ENCODE measurements at regions of chr18 and their contacts with region 1.

Region 1: GRCh38 chr18:45657357-45658335 is 42.4 kb downstream of the SLC14A2 start:
- DNase-seq: no peak
- H3K4me3 ChIP-seq: no peak overlapping the region
- H3K27ac ChIP-seq: no peak overlapping the region
- H3K4me1 ChIP-seq: no peaks in the 10 kb centered on the region
- H3K27me3 ChIP-seq: no peaks in the 10 kb centered on the region
- CTCF ChIP-seq: no peak

Region 2: DNA sequence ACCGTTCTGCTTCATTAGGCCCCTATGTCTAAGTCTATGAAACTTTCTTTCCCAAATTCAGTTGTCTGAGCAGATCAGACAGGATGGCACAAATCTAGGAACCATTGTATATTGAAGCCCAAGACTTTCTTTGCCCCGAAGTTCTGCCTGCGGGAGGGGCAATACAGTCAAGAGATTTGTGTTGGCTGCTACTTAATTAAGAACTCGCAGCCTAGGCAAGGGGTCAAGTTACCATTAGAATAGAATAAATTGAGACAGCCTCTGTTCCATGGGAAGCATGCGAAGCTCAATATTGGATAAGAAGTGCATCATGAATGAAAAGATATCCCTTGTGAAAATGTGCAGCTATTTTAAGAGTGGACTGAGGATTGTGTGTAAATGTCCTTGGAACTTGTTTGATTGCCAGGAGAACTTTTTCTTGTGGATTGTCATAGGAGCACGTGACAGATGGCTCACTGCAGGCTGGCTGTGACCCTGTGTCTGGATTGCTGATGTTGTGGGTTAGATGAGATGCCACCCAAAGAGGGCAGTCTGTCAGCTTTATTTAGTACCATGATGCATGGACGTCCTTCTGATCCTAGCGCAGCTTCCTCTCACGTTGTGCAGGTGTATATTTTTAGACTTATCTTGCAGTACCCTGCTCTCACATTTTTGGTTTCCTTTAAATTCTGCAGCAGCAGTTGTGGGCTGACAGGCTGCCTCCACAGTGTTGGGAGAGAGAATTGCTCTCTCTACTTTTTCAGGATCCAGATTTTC is 477.5 kb after region 1 on chr18:
- CTCF ChIA-PET with region 1: no interaction called
- POLR2A ChIA-PET with region 1: interaction called, 20 read pairs
- intact Hi-C with region 1: no loop called
- DNase-seq: no peak
- H3K4me3 ChIP-seq: no peak overlapping the region
- H3K27ac ChIP-seq: no peak overlapping the region
- H3K4me1 ChIP-seq: no peaks in the 10 kb centered on the region
- H3K27me3 ChIP-seq: no peaks in the 10 kb centered on the region
- CTCF ChIP-seq: no peak

Measured in A673 (cell line).